AG04450 (cell line): ENCODE measurements at regions of chr16 and their contacts with region 1.

Region 1: DNA sequence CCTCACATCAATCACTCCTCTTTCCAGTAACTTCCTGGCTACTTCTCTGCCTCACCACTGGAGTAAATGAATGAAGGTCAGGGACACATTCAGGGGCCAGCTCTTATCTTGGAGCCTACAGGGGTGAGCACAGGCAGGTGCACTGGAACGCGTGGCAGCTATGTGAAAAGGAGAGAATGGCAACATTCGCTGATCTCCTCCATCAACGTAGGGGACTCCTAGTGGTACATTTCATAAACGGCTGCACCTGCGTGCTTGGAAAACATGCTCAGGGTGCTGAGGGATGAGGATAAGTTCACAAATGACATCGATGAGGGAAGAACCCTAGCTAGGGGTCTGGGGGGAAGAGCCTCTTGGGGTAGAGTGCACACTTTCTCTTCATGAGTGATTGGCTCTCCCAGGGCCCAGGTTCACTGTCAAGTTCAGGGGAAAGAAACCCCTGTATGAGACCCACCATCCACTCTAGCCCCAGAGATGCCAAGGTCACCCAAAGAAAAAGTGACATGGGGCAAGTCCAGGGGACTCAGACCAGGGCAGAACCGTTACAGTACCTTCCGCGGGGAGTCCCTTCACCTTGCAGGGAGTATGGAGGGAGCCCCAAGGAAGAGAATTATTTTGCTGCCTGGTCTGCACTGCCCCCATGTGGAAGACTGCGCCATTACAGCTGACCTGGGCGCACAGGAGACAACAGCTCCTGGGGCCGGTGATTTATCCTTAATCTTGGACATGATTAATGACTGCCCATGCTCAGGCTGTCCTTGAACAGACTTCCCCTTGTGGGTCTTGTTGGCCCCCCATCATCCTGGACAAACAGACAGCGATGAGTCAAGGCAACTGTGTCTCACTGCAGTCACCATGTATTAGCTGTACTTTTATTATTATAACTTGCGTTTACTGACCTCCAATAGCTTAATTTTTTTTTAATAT is 30.1 kb downstream of the VAC14 start:
- DNase-seq: no peak
- H3K4me3 ChIP-seq: no peak overlapping the region
- H3K27ac ChIP-seq: no peak overlapping the region
- H3K27me3 ChIP-seq: no peaks in the 10 kb centered on the region
- CTCF ChIP-seq: peak; percentile 97

Region 2: DNA sequence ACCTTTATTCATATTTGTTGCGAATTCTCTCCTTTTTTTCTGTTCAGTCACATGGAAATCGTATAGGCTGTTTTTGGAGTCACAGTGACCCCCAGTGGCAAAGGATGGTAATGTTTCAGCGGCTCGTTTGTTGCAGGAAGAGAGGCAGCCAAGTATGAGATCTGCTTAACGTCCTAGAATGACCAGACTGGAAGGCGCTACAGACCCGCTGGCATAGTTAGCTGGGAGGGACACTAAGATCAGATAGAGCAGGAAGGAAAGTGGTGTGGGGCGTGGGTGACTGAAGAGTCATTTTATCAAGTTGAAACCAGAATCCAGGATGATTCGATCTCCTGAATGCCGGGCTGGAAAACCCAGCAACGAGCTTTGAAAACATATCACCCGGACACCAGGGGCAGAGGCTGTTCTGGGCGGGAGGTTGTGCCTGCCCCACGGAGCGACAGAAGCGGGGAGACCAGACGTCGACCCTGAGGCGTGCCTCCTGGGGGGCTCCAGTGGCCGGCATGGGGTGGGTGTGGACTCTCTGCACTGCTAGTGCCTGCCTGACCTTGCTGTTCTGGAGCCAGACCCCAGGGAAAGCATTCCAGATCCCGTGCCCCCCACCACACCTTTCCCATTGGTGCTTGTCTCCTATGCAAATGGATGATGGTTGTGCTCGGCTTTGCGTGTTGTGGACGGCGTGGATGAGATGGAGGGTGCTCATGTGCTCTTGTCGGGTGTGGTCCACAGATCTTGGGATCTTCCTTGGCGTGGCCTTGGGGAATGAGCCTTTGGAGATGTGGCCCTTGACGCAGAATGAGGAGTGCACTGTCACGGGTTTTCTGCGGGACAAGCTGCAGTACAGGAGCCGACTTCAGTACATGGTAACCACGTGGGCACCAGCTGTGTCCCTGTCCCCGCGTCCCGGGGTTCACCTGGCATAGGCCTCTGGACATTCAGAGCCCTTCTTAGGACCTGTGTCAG is 116.8 kb before region 1 on chr16:
- CTCF ChIA-PET with region 1: interaction called, 58 read pairs
- POLR2A ChIA-PET with region 1: interaction called, 3 read pairs
- DNase-seq: peak; percentile 54
- H3K4me3 ChIP-seq: peak overlapping the region; percentile 41
- H3K27ac ChIP-seq: no peak overlapping the region
- H3K27me3 ChIP-seq: no peaks in the 10 kb centered on the region
- CTCF ChIP-seq: peak; percentile 93

Region 3: DNA sequence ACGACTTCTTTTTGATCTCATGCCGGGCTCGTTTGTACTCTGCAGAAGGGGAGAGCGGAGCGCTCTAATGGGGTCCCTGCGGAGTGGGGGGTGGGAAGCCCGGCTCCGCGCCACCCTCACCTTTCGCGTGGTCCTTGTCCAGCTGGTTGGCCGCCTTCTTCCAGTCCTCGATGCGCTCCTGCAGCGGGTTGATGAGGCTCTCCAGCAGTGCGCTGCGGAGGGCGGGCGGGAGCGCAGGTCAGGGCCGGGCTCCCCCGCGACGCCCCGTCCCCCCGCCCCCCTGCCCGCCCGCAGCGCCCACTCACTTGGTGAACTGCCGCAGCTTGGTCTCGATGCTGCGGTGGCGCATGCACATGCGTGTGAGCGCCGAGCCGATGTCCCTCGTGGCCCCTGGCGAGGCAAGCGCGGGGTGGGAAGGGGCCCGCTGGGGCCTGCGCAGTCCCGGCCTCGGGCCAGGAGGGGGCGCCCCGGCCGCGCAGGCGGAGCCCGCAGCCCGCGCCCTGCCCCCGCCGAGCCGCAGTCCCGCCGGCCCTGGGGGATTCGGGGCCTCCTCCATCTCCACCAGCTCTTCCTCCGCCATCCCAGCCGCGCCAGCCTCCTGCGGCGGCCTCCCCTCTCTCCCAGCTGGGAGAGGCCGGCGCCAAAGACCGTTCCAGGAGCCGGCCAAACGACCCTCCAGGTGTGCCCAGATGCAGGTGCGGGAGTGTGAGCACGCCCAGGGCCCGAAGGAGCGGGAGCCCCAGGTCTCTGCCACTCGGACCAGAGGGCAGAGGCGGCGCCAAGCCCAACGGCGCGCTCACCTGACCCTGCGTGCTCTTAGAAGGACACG is 91.0 kb before region 1 on chr16:
- CTCF ChIA-PET with region 1: interaction called, 68 read pairs
- POLR2A ChIA-PET with region 1: interaction called, 3 read pairs
- DNase-seq: no peak
- H3K4me3 ChIP-seq: no peak overlapping the region
- H3K27ac ChIP-seq: no peak overlapping the region
- H3K27me3 ChIP-seq: no peaks in the 10 kb centered on the region
- CTCF ChIP-seq: peak; percentile 13

Region 4: GRCh38 chr16:70703041-70703834 is 67.7 kb before region 1 on chr16:
- CTCF ChIA-PET with region 1: interaction called, 16 read pairs
- POLR2A ChIA-PET with region 1: interaction called, 7 read pairs
- DNase-seq: peak; percentile 84
- H3K4me3 ChIP-seq: no peak overlapping the region
- H3K27ac ChIP-seq: peak overlapping the region; percentile 99
- H3K27me3 ChIP-seq: no peaks in the 10 kb centered on the region
- CTCF ChIP-seq: peak; percentile 60

Region 5: DNA sequence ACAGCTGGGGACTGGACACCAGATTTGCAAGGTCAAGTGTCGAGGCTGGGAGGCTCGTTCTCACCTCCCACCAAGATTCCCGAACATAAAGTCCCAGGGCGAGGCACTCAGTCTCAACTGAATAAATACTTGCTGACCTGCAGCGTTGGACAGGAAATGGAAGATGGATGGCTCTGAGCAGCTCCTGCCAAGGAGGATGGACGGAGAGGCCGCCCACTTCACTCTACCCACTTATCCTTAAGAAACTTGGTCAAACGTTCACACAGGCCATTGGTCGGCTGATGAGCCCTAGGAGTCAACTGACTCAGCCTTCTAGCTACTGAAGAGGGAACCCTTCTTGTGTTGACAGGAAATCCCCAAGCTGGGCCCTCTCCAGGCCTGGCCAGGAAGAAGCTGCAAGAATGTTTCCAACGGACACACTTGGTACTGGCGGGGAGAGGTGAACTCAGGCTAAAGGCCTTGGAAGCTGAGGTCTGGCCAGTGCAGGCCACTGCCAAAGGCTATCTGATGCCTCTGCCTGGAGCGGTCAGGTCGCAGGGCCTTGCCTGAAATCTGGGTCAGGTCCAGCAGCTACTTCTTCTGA is 19.9 kb before region 1 on chr16:
- CTCF ChIA-PET with region 1: interaction called, 11 read pairs
- POLR2A ChIA-PET with region 1: interaction called, 3 read pairs
- DNase-seq: peak; percentile 96
- H3K4me3 ChIP-seq: no peak overlapping the region; the same call in 1 of the 2 replicates
- H3K27ac ChIP-seq: peak overlapping the region; percentile 84
- H3K27me3 ChIP-seq: no peaks in the 10 kb centered on the region
- CTCF ChIP-seq: no peak